Head of caudate nucleus (tissue), 42 donors: ENCODE measurements at regions of chr12 and their contacts with region 1.

Region 1: GRCh38 chr12:70576346-70577282 is 60.6 kb downstream of the PTPRB start:
- DNase-seq: peak in 19 of 42 donors; percentile 5 to 79 (median 45)

Region 2: DNA sequence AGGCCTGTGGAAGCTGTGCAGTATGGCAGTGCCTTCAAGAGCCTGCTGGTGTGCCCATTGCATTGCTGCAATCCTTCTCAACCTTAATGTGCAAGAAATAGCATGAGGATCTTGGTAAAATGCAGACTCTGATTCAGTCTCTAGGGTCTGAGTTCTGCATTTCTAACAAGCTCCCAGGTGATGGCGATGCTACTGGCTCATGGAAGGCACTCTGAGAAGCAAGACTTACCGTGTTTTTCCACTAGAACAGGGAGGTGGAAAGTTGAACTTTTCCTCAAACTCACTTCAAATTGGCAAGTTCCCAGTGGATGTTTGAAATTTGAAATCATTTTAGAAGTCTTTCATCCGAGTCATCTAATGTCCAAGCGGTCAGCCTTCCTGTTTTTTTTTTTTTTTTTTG is 696.0 kb before region 1 on chr12:
- intact Hi-C with region 1: loop called (anchors 5 kb)
- DNase-seq: no peak

Region 3: GRCh38 chr12:69900720-69901131 is 675.9 kb before region 1 on chr12:
- intact Hi-C with region 1: loop called (anchors 2 kb)
- DNase-seq: peak; percentile 9 to 94 (median 81)

Region 4: DNA sequence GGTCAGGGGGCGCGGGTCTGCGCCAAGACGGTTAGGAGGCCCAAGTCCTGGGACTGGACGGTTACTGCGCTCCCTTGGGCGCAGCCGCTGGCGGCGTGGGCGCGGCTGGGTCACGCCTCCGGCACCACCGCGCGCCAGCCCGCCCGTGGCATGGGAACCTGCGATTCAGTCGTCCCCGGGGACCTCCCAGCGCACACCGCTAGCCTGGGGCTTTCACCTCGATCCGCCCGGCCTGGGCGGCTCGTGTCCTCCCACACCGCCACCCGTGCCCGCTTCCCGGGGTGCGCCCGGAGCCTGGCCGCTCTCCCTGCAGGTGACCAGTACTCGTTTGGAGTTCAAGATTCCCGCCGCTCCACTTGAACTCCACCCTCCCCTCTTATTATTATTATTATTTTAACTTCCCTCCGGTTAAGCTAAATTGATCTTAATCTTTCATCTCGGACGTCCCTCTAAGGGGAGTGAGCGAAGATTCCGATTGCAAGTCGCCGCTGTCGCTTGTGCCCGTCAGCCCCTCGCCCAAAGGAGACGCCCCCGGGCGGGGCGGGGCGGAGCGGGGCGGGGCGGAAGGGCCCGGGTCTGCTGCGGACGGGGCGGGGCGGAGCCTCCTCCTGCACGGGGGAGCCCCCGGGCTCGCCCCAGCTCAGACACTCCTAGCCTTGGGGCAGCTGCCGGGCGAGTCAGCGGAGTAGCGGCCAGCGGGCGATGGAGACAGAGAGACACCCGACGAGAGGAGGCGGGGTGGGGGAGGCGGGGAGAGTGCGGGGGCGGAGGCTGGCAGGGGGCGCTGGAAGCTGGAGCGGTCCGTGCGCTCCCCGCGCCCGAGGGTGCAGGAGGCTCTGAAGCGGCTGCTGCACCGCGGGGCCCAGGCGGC is 210.7 kb before region 1 on chr12 and contains the start of gene KCNMB4:
- intact Hi-C with region 1: loop called (anchors 5 kb)
- DNase-seq: peak; percentile 75 to 95 (median 87)

Region 5: DNA sequence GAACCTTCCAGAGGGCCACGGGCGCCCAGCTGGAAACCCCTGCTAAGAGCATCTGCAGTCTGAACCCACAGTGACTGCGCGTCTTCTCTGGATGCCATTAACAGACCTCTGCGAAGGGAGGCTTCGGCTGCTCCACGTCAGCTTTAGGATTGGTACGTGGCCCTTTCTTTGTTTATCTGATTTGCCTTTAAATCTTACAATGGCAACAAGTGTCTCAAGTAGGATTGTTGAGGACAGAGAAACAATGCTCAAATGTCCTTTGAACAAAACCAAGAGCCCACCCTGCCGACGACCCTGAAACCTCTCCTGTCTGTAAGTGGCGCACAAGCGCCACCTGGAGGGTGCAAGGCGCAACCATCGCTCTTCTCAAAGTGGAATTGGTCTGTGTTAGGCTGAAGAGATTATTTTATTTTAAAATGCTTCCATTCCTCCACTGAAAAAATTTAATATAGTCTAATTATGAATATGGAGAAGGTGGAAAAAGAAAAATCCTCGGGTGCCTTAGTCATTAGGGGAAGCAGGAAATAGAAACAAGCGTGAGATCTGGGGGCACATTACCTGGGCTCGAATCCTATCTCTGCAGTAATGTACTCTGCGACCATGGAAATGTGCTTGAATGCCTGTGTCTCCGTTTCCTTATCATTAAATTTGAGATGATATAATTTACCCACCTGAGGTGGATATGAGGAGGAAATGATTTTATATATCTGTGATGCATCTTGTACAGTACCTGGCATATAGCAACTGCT is 143.2 kb after region 1 on chr12:
- intact Hi-C with region 1: no loop called
- DNase-seq: peak; percentile 36 to 86 (median 66)

Region 6: DNA sequence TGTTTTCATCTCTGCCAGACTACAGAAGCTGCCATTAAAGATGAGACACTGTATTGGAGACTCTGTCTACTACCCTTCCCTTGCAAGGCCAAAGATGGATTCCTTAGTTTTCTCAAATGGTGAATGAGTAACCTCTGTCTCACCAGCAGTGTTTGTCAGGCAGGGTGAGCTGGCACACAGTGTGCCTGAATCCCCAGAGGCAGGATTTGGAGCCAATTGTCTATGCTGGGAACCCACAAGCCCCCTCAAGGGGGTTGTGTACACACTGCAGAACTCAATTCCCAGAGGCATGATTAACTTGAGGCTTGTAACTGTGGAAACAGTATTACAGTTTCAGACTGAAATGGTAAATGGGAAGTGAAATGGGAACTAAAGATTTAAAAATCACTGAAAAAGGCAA is 197.4 kb after region 1 on chr12:
- intact Hi-C with region 1: no loop called
- DNase-seq: no peak